Breast epithelium (tissue), 4 donors: ENCODE measurements at regions of chr16 and their contacts with region 1.

Region 1: DNA sequence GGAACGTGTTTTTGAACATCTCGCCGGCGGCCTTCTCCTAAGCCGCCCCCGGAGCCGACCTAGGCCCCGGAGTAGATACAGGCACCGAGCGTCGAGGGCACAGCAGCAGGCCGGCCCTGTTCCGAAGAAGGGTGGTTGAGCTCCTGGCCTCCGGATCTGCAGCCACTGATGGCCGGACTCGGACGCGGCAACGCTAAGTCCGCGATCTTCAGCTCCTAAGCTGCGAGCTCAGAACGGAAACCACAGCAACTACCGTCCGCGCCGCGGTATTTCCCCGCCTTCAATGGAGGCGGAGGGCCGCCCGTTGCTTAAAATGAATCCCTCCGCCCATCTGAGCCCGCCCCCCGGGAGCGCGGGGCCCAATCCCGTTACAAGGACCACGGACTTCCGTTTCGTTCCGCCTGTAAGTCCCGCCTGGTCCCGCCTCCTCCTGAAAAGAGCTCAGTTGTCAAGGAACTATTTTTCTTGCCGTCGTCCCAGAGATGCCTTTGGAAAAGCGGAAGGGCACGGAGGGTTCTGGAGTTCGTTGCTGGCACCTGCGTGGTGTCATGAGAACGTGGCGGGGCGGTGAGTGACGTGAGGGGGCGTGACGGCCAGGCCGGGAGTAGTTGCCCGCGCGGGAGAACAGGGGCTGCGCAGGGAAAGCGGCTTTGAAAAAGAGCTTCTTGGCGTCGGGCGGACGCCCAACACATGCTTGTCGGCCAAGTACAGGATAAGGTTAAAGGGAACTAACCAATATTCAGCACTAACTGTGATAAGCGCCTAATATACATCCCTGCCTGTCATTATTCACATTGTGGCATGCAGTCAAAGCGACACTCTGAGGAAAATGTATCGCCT is at the start of gene CFAP20:
- DNase-seq: peak; percentile 98
- H3K4me3 ChIP-seq: peak within 1 kb of the TSS; percentile 93 to 98 (median 97)
- H3K27ac ChIP-seq: peak within 1 kb of the TSS; percentile 90
- H3K4me1 ChIP-seq: peaks cover 0 to 8% of the 10 kb centered on the region in 2 donors
- H3K27me3 ChIP-seq: no peaks in the 10 kb centered on the region
- CTCF ChIP-seq: peak in 1 of 3 donors; percentile 7
- POLR2A ChIP-seq: peak; percentile 77
- total RNA-seq, gene CFAP20: 30.5 to 46.1 (median 30.9) TPM

Region 2: DNA sequence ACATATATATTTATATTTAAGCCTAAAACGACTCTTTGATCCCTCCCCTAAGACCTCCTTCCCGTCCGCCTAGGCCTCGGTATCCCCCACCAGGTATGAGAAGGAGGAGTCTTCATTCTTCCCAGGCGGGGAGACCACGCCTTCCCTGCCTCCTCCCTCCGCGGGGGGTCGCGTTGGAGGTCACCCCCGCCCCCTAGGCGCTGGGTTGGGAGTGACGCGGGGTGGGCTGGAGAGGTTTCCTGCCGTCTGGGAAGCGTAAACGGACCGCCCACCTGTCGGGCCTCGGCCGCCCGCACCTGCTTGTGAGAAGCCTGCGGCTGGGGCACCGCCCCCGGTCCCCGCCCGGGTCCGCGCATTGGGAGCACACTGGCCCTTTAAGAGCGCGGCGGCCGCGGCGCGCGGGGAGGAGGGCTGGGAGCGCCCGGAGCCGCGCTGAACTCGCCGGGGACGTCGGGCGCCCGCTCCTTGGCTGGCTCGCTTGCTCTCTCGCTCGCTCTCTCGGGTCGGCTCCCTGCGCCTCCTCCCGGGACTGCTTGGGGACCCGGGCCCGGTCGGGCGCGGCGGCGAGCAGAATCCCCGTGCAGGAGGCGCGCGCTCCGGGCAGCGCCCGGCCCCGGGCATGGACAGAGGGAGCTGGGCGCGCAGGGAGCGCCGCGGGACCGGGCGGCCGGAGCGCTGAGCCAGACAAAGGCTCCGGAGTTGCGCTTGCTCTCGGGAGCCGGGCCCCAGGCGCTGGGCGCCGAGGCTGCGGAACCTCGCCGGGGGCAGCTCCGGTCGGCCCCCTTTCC is 103.8 kb before region 1 on chr16 and contains the start of gene MMP15:
- intact Hi-C with region 1: loop called (anchors 5 kb)
- DNase-seq: peak; percentile 40 to 70
- H3K4me3 ChIP-seq: peak within 1 kb of the TSS; percentile 66 to 92 (median 72)
- H3K27ac ChIP-seq: peak within 1 kb of the TSS; percentile 67 to 78
- H3K4me1 ChIP-seq: peaks cover 6 to 11% of the 10 kb centered on the region in 2 donors
- H3K27me3 ChIP-seq: no peaks in the 10 kb centered on the region
- CTCF ChIP-seq: no peak
- POLR2A ChIP-seq: no peak
- total RNA-seq, gene MMP15: 4.6 to 5.3 (median 4.8) TPM